ENCODE measurements at regions of chr3 and their contacts with region 1.

Region 1: GRCh38 chr3:50272911-50273693 is 4.2 kb downstream of the SEMA3B start:
- DNase-seq: peak; percentile 94
- ATAC-seq: peak; percentile 37
- H3K4me3 Mint-ChIP-seq: peak overlapping the region; percentile 67
- H3K27ac Mint-ChIP-seq: no peak overlapping the region
- H3K4me1 Mint-ChIP-seq: peaks cover 38% of the 10 kb centered on the region
- H3K27me3 Mint-ChIP-seq: peaks cover 53% of the 10 kb centered on the region
- CTCF ChIP-seq: peak; percentile 97

Region 2: DNA sequence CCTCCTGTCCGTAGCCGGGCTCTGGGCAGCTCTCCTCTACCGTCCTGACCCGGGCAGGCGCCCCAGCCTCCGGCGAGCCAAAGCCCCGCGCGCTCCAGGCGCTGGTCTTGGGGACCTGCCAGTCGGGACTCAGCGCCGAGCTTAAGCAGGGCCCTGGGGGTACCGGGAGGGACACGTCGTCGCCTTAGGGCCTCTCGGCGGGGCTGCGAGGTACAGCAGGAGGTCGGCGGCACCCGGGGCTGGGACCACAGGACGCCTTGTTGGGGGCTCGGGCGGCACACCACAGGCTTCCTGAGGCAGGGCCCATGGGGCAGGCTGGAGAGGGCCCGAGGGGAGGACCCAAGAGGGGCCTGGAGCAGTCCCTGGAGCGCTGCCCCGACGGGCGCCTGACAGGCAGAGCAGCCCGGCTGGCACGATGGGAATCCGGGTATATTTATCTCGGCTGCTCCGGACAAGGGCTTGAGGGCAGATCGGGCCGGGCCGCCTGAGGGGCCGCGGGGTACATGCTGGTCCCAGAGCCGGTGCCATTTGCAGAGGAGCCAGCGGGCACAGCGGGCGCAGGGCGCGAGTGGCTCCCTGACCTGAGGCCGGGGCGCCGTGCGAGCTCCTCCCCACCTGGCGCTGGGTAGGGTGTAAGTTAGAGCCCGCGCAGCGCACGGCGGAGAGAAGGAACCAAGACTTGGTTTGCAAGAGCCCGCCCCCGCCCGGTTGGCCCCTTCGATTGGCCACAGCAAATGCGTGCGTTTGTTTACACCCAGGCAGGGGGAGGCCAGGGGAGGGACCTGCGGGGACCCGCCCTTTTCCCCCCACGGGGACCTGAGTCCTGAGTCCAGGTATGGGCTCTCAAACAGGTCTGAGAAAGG is 67.5 kb before region 1 on chr3:
- CTCF ChIA-PET with region 1: interaction called, 15 read pairs
- POLR2A ChIA-PET with region 1: no interaction called
- DNase-seq: peak; percentile 87
- ATAC-seq: peak; percentile 70
- H3K4me3 Mint-ChIP-seq: peak overlapping the region; percentile 67
- H3K27ac Mint-ChIP-seq: no peak overlapping the region
- H3K4me1 Mint-ChIP-seq: peaks cover under 1% of the 10 kb centered on the region; the same call in 1 of the 2 replicates
- H3K27me3 Mint-ChIP-seq: peaks cover 38% of the 10 kb centered on the region
- CTCF ChIP-seq: no peak

Region 3: DNA sequence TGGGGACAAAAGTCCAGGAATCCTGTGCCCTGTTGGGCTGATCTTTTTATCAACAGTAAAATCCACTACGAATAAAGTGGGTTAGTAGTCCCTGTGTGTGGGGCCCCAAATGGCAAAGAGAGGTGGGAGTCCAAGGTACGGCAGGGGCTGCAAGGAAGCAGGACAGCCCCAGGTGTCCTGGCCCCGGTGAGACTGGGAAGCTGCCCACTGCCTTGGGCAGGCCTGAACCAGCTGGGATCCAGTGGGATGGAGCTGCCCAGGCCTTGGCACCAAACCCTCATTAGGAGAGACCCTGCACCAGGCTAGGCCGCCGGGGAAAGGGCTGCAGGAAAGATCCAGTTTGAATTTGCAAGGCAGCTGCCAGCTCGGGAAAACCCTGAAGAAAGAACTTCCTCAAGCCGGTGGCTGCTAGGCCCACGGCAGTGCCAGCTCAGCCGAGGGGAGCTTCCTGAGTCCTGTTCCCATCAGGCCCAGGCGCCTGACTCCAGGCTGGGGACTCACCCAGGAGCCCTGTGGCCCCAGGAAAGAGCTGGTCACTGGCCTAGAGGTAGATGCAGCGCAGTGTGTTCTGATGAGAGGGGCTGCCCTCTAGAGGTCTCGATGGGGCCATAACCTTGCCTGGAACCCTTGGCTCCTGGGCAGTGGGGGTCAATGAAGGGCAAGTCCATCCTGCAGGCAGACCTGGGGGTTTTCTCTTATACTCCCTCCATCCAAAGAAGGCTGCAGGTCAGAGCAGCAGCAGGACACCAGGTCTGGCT is 51.5 kb before region 1 on chr3:
- CTCF ChIA-PET with region 1: interaction called, 80 read pairs
- POLR2A ChIA-PET with region 1: interaction called, 3 read pairs
- DNase-seq: peak; percentile 78
- ATAC-seq: peak; percentile 84
- H3K4me3 Mint-ChIP-seq: no peak overlapping the region
- H3K27ac Mint-ChIP-seq: no peak overlapping the region; the same call in 1 of the 2 replicates
- H3K4me1 Mint-ChIP-seq: peaks cover 9% of the 10 kb centered on the region
- H3K27me3 Mint-ChIP-seq: peaks cover under 1% of the 10 kb centered on the region
- CTCF ChIP-seq: no peak; the same call in 1 of the 2 replicates

Region 4: DNA sequence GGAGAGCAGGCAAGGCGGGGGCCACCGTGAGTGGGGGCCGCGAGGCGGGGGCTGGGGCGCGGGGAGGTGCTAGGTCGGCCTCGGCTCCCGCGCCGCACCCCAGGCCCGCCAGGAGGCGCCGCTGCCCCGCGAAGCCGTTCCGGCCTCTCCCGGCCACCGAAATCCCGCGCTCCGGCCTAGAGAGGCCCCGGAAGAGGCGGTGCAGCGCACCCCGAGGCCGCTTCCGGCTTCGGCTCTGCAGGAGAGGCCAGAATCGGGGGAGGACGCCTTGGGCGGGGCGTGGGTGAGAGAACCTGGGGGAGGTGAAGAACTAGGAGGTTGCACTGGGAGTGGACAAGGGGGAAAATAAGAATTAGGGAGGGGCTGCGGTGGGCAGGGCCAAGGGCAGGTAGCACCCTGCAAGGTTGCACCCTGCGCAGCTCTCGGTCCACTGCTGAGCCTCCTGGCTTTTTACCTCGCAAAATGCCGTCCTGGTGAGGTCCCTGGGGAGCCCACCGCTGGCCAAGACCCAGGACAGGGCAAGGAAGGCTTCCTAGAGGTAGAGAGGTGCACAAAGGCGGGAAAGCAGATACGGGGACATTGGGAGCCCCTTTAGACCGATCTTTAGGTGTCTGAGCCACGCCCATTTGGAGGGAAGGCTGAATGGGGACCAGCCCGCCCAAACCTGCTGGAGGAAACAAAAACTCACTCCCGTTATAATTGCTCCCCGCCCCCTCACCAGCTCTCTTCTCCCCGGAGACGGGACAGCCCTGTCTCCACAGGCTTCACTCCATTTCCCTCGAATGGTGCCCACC is 45.5 kb before region 1 on chr3:
- CTCF ChIA-PET with region 1: interaction called, 80 read pairs
- POLR2A ChIA-PET with region 1: no interaction called
- DNase-seq: peak; percentile 92
- ATAC-seq: peak; percentile 75
- H3K4me3 Mint-ChIP-seq: peak overlapping the region; percentile 96
- H3K27ac Mint-ChIP-seq: peak overlapping the region; percentile 89
- H3K4me1 Mint-ChIP-seq: peaks cover 24% of the 10 kb centered on the region
- H3K27me3 Mint-ChIP-seq: peaks cover 4% of the 10 kb centered on the region
- CTCF ChIP-seq: peak; percentile 61

Region 5: GRCh38 chr3:50235716-50236496 is 37.2 kb before region 1 on chr3 and contains the start of gene GNAI2:
- CTCF ChIA-PET with region 1: interaction called, 17 read pairs
- POLR2A ChIA-PET with region 1: interaction called, 4 read pairs
- DNase-seq: peak; percentile 99
- ATAC-seq: peak; percentile 94
- H3K4me3 Mint-ChIP-seq: peak within 1 kb of the TSS; percentile 97
- H3K27ac Mint-ChIP-seq: peak within 1 kb of the TSS; percentile 93
- H3K4me1 Mint-ChIP-seq: peaks cover 48% of the 10 kb centered on the region
- H3K27me3 Mint-ChIP-seq: no peaks in the 10 kb centered on the region
- CTCF ChIP-seq: no peak
- total RNA-seq, gene GNAI2: 181 to 185 TPM (median 185 TPM) in 3 replicates

Region 6: GRCh38 chr3:50298836-50299637 is 25.9 kb after region 1 on chr3 and contains the starts of genes HYAL3 and NAA80:
- CTCF ChIA-PET with region 1: interaction called, 10 read pairs
- POLR2A ChIA-PET with region 1: no interaction called
- DNase-seq: peak; percentile 100
- ATAC-seq: peak; percentile 88
- H3K4me3 Mint-ChIP-seq: peak within 1 kb of the TSS; percentile 97
- H3K27ac Mint-ChIP-seq: peak within 1 kb of the TSS; percentile 98
- H3K4me1 Mint-ChIP-seq: peaks cover 22% of the 10 kb centered on the region
- H3K27me3 Mint-ChIP-seq: no peaks in the 10 kb centered on the region; the same call in 1 of the 2 replicates
- CTCF ChIP-seq: no peak; the same call in 1 of the 2 replicates
- total RNA-seq, gene HYAL3: 2.9 to 3.8 TPM (median 3.2 TPM) in 3 replicates
- total RNA-seq, gene NAA80: 13.7 to 17.3 TPM (median 13.7 TPM) in 3 replicates

Region 7: DNA sequence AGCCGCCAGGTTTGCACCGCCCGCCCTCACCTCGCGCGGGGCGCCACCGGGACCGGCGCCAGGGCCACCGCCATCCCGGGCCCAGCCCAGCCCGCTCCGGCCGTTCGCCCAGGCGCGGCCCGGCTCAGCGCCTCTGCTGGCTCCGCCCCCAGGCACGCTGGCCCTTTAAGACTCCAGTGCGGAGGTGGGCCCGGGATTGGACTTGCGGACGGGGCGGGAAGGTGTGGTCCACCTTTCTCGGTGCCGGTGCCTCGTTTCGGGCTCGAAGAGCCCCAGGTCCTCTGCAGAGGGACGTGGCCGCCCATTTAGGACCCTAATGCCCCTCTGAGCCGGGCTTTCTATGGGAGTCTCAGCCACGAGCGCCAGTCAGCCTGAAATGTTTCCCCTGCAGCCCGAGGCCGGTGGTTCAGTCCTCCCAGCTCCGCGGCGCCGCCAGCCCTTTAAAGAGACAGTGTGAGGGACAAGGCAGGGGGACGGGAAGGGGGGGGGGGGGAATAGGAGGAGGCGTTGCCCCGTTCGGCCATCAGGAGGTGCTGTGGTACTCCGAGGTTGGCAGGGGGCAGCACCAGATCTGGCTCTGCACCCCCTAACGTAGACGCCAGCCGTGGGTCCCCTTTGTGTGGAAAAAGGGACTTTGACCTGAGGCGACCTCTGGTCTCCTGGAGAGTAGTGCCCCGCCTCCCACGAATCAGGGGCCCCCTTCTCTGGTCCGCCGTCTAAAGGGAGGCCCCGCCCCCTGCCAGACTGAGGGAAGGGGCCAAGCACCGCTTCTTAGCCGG is 48.4 kb after region 1 on chr3:
- CTCF ChIA-PET with region 1: interaction called, 31 read pairs
- POLR2A ChIA-PET with region 1: no interaction called
- DNase-seq: peak; percentile 90
- ATAC-seq: peak; percentile 71
- H3K4me3 Mint-ChIP-seq: peak overlapping the region; percentile 88
- H3K27ac Mint-ChIP-seq: peak overlapping the region; percentile 97
- H3K4me1 Mint-ChIP-seq: peaks cover 40% of the 10 kb centered on the region
- H3K27me3 Mint-ChIP-seq: no peaks in the 10 kb centered on the region
- CTCF ChIP-seq: peak; percentile 56; the same call in 1 of the 2 replicates